Activated CD4-positive, alpha-beta memory T cell treated with anti-CD3 and anti-CD28 coated beads for 36 hours (primary cell): ENCODE measurements at regions of chr17 and their contacts with region 1.

Region 1: DNA sequence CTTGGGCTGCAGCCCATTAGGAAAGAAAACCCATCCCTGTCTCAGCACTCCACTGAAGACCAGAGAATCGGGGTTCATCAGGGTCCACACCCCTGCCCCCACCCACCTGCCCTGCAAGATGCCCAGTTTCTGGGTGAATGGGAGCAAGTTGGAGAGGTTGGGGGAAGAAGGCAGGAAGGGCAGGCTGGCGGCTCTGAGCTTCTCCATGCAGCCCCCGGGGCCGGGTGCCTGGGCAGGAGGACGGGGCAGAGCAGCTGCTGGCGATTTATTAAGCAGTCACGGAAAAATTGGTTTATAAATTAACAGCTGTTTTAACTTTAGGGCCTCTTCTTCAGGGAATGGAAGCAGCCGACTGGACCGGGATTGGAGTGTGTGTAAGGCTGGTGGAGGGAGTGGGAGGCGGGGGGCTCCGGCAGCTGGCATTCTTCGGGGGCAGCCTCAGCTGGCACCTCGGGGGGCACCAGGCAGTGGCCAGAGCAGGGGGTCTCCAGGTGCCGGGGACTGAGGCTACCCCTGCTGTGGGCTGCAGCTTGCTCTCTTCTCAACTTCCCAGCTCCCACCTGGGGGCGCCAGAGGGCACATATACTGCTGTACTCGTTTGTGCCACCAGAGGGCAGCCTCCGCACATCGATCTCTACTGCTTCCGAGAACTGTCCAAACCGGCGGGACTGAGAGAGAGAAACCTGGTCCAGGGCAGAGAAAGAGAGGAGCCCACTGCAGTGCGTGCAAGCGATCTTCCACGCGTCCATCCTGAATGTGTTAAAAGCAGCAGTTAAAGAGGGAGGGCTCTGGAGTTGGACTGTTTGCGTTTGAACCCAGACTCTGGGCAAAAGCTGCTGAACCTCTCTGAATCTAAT is 5.0 kb upstream of the PPP1R1B start:
- DNase-seq: peak; percentile 92
- H3K4me3 Mint-ChIP-seq: peak overlapping the region; percentile 76
- H3K27ac Mint-ChIP-seq: peak overlapping the region; percentile 97
- H3K4me1 Mint-ChIP-seq: peaks cover 23% of the 10 kb centered on the region
- H3K27me3 Mint-ChIP-seq: peaks cover 20% of the 10 kb centered on the region

Region 2: GRCh38 chr17:39598047-39598481 is 23.7 kb before region 1 on chr17:
- CTCF ChIA-PET with region 1: interaction called, 56 read pairs
- POLR2A ChIA-PET with region 1: no interaction called
- intact Hi-C with region 1: no loop called
- DNase-seq: no peak
- H3K4me3 Mint-ChIP-seq: no peak overlapping the region
- H3K27ac Mint-ChIP-seq: no peak overlapping the region
- H3K4me1 Mint-ChIP-seq: peaks cover 27% of the 10 kb centered on the region
- H3K27me3 Mint-ChIP-seq: peaks cover 77% of the 10 kb centered on the region

Region 3: GRCh38 chr17:39636927-39637736 is 15.4 kb after region 1 on chr17 and contains the start of gene STARD3:
- CTCF ChIA-PET with region 1: interaction called, 178 read pairs
- POLR2A ChIA-PET with region 1: interaction called, 3 read pairs
- intact Hi-C with region 1: loop called (anchors 1 kb)
- DNase-seq: peak; percentile 95
- H3K4me3 Mint-ChIP-seq: peak within 1 kb of the TSS; percentile 88
- H3K27ac Mint-ChIP-seq: peak within 1 kb of the TSS; percentile 83
- H3K4me1 Mint-ChIP-seq: peaks cover 51% of the 10 kb centered on the region
- H3K27me3 Mint-ChIP-seq: no peaks in the 10 kb centered on the region
- total RNA-seq, gene STARD3: 53.6 to 60.3 TPM

Region 4: GRCh38 chr17:39668199-39668966 is 46.6 kb after region 1 on chr17 and contains the start of gene PNMT:
- CTCF ChIA-PET with region 1: interaction called, 57 read pairs
- POLR2A ChIA-PET with region 1: interaction called, 4 read pairs
- intact Hi-C with region 1: no loop called
- DNase-seq: peak; percentile 76
- H3K4me3 Mint-ChIP-seq: peak within 1 kb of the TSS; percentile 35
- H3K27ac Mint-ChIP-seq: no peak within 1 kb of the TSS
- H3K4me1 Mint-ChIP-seq: peaks cover 11% of the 10 kb centered on the region
- H3K27me3 Mint-ChIP-seq: peaks cover 25% of the 10 kb centered on the region
- total RNA-seq, gene PNMT: not detected

Region 5: GRCh38 chr17:39687811-39688518 is 66.2 kb after region 1 on chr17 and contains the start of gene PGAP3:
- CTCF ChIA-PET with region 1: interaction called, 12 read pairs
- POLR2A ChIA-PET with region 1: no interaction called
- intact Hi-C with region 1: no loop called
- DNase-seq: peak; percentile 91
- H3K4me3 Mint-ChIP-seq: peak within 1 kb of the TSS; percentile 92
- H3K27ac Mint-ChIP-seq: peak within 1 kb of the TSS; percentile 84
- H3K4me1 Mint-ChIP-seq: peaks cover 18% of the 10 kb centered on the region
- H3K27me3 Mint-ChIP-seq: no peaks in the 10 kb centered on the region
- total RNA-seq, gene PGAP3: 8.3 to 8.6 TPM

Region 6: DNA sequence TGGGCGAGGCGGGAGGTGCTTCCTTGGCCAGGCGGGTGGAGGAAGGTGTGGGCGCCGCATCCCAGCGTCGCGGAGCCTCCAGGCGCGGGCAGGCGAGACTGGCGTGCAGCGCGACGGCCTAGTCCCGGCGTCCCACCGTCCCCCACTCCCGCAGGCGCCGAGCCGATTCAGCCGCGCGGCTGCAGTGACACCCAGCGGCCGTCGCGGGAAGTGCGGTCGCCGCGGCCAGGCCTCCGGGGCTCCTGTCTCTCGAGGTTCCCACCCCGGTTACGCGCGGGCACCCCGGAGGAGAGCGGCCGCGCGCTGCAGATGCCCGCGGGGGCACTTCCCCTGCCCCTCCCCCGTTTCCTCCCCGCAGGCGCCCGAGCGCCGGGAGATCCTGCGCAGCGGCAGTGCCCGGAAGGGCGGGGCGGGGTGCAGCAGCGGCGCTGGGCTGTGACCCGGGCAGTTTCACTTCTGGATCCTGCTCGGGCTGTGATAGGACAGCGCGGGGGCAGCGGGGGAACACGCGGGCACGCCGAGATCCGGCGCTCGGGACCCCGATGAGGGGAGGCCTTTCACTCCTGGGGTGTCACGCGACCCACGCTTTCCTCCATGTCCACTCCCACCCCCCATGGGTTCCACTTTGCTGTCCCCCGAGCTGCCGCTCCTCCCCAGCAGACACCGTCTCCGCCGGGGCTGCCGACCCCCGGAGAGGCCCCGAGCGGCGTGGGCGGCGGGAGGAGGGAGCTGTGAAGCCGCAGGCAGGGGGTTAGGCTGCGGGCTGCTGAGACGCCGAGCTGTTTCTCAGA is 132.6 kb after region 1 on chr17:
- CTCF ChIA-PET with region 1: interaction called, 32 read pairs
- POLR2A ChIA-PET with region 1: interaction called, 6 read pairs
- intact Hi-C with region 1: loop called (anchors 1 kb)
- DNase-seq: peak; percentile 98
- H3K4me3 Mint-ChIP-seq: peak overlapping the region; percentile 78
- H3K27ac Mint-ChIP-seq: peak overlapping the region; percentile 91
- H3K4me1 Mint-ChIP-seq: peaks cover 67% of the 10 kb centered on the region
- H3K27me3 Mint-ChIP-seq: no peaks in the 10 kb centered on the region